Endothelial cell of umbilical vein (primary cell): ENCODE measurements at regions of chr19 and their contacts with region 1.

Region 1: DNA sequence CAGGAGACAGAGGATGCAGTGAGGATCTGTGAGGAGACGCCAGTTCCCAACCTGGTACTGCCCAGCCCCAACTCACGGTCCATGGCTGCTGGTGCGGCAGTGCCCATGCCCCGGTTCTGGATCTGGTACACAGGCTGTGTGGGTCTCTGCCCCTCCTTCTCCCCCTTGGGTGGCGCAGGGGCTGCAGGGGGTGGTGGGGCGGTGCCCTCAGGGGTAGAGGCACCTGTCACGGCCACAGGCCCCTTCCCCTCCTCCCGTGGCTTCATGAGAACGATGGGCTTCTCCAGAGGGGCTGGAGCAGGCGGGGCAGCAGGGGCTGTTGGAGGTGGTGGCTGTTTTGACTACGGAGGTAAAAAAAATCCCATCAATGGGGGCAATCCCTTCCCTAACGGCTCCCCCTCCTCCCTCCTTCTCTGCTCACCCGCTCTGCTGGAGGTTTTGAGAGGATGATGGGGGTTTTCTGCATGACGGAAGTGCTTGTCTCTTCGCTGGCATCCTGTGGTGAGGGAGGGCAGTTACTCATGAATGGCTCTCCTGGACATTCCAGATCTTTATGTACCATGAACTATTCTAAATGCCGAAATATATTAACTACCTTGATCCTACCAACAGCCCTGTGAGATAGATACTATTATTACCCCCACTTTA is 7.1 kb downstream of the SMG9 start:
- DNase-seq: no peak
- H3K4me3 ChIP-seq: no peak overlapping the region
- H3K27ac ChIP-seq: no peak overlapping the region
- H3K4me1 ChIP-seq: peaks cover 5% of the 10 kb centered on the region
- H3K27me3 ChIP-seq: no peaks in the 10 kb centered on the region
- CTCF ChIP-seq: no peak
- POLR2A ChIP-seq: no peak

Region 2: DNA sequence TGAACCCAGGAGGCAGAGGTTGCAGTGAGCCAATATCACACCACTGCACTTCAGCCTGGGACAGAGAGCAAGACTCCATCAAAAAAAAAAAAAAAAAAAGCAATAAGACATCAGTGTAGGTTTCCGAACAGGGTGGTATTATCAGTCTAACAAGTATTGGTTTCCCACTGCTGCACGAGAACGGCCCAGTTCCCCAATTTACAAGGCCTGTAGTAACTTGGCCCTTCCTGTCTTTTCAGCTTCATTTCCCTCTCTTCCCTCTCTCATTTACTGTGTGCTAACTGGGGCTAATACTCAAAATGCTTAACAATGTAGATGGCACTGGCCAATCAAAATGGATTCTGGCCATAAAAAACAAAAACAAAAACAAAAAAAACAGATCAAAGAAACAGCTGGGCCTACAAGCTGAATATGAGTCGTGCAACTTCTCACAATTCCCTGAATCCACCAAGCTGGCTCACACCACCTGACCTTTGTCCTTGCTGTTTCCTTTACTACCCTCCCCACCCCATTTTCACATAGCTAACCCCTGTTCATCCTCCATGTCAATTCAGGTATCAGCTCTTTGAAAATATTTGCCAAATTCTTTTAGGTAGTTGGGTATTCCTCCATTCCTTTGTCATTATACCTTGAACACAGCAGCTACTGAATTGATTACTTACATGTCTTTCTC is 330.6 kb before region 1 on chr19:
- CTCF ChIA-PET with region 1: no interaction called
- POLR2A ChIA-PET with region 1: no interaction called
- dilution Hi-C with region 1: no loop called
- intact Hi-C with region 1: no loop called
- DNase-seq: no peak
- H3K4me3 ChIP-seq: no peak overlapping the region
- H3K27ac ChIP-seq: no peak overlapping the region
- H3K4me1 ChIP-seq: no peaks in the 10 kb centered on the region
- H3K27me3 ChIP-seq: no peaks in the 10 kb centered on the region
- CTCF ChIP-seq: no peak
- POLR2A ChIP-seq: no peak

Region 3: GRCh38 chr19:43723588-43723987 is 24.1 kb before region 1 on chr19:
- CTCF ChIA-PET with region 1: interaction called, 14 read pairs
- POLR2A ChIA-PET with region 1: no interaction called
- dilution Hi-C with region 1: no loop called
- intact Hi-C with region 1: no loop called
- DNase-seq: no peak
- H3K4me3 ChIP-seq: no peak overlapping the region
- H3K27ac ChIP-seq: no peak overlapping the region
- H3K4me1 ChIP-seq: peaks cover 5% of the 10 kb centered on the region
- H3K27me3 ChIP-seq: no peaks in the 10 kb centered on the region
- CTCF ChIP-seq: no peak
- POLR2A ChIP-seq: no peak

Region 4: DNA sequence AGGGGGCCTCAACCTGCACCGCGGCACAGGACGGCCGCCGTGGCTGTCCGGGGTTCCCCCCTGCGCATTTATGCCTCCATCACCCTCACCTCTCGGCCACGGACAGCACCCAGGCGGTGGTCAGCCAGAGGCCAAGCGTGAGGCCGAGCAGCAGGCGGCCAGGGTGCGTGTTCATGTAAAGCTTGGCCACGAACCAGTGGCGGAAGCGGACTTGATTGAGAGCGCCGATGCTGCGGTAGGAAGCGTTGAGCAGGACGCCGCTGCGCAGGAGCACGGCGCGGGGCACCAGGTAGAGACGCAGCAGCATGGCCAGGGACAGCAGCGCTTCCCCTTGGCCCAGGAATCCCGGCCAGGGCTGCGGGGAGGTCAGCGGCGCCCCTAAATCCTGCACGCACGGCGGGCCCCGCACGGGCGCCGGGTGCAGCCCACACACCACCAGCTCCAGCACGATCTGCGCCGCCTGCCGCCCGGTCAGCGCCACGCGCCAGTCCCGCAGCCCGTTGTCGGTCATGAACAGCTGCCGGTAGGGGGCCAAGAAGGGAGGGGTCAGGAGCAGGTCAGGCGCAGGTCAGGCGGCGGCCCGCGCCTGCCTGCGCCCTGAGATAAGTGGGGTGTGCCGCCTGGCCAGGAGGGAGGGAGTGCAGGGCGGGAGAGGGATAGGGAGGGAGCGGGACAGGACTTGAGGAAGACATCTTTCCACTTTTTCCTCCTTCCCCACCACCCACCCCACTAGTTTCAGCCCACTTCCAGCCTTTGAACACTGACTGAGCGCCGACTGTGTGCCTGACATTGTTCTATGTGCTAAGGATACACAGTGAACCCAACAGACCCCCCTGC is 26.6 kb after region 1 on chr19:
- CTCF ChIA-PET with region 1: interaction called, 57 read pairs
- POLR2A ChIA-PET with region 1: no interaction called
- dilution Hi-C with region 1: no loop called
- intact Hi-C with region 1: loop called (anchors 1 kb)
- DNase-seq: peak; percentile 70
- H3K4me3 ChIP-seq: no peak overlapping the region
- H3K27ac ChIP-seq: no peak overlapping the region
- H3K4me1 ChIP-seq: peaks cover 22% of the 10 kb centered on the region
- H3K27me3 ChIP-seq: peaks cover 0 to 3% of the 10 kb centered on the region in 2 experiments
- CTCF ChIP-seq: peak; percentile 27 to 93
- POLR2A ChIP-seq: no peak